GM12878 (cell line): ENCODE measurements at regions of chr9 and their contacts with region 1.

Region 1: GRCh38 chr9:110933350-110934001 is 104.8 kb downstream of the LPAR1 start:
- DNase-seq: peak; percentile 41
- ATAC-seq: peak; percentile 80
- H3K4me3 ChIP-seq: peak overlapping the region; percentile 5; the same call in 1 of the 2 replicates
- H3K27ac ChIP-seq: peak overlapping the region; percentile 47
- H3K4me1 ChIP-seq: peaks cover 10% of the 10 kb centered on the region
- H3K27me3 ChIP-seq: no peaks in the 10 kb centered on the region
- CTCF ChIP-seq: no peak
- EP300 ChIP-seq: 0 out of 4 replicates have a peak, but pooled peaks of 1 of the 2 experiments have one; percentile 15
- POLR2A ChIP-seq: no peak
- RAD21 ChIP-seq: no peak

Region 2: GRCh38 chr9:110088099-110088498 is 845.4 kb before region 1 on chr9:
- CTCF ChIA-PET with region 1: no interaction called
- POLR2A ChIA-PET with region 1: no interaction called
- RAD21 ChIA-PET with region 1: no interaction called
- SMC1A ChIA-PET with region 1: no interaction called
- in situ Hi-C with region 1: no loop called
- intact Hi-C with region 1: no loop called
- DNase-seq: no peak
- ATAC-seq: peak; percentile 84
- H3K4me3 ChIP-seq: no peak overlapping the region
- H3K27ac ChIP-seq: no peak overlapping the region
- H3K4me1 ChIP-seq: peaks cover 6% of the 10 kb centered on the region
- H3K27me3 ChIP-seq: no peaks in the 10 kb centered on the region
- CTCF ChIP-seq: no peak
- EP300 ChIP-seq: no peak
- POLR2A ChIP-seq: no peak
- RAD21 ChIP-seq: no peak

Region 3: GRCh38 chr9:110947491-110948044 is 14.1 kb after region 1 on chr9:
- CTCF ChIA-PET with region 1: interaction called, 15 read pairs
- POLR2A ChIA-PET with region 1: interaction called, 6 read pairs
- RAD21 ChIA-PET with region 1: interaction called, 33 read pairs
- SMC1A ChIA-PET with region 1: interaction called, 44 read pairs
- in situ Hi-C with region 1: no loop called
- intact Hi-C with region 1: no loop called
- DNase-seq: no peak
- ATAC-seq: no peak
- H3K4me3 ChIP-seq: no peak overlapping the region
- H3K27ac ChIP-seq: no peak overlapping the region
- H3K4me1 ChIP-seq: peaks cover 6% of the 10 kb centered on the region
- H3K27me3 ChIP-seq: no peaks in the 10 kb centered on the region
- CTCF ChIP-seq: no peak
- EP300 ChIP-seq: no peak
- POLR2A ChIP-seq: no peak
- RAD21 ChIP-seq: no peak

Region 4: DNA sequence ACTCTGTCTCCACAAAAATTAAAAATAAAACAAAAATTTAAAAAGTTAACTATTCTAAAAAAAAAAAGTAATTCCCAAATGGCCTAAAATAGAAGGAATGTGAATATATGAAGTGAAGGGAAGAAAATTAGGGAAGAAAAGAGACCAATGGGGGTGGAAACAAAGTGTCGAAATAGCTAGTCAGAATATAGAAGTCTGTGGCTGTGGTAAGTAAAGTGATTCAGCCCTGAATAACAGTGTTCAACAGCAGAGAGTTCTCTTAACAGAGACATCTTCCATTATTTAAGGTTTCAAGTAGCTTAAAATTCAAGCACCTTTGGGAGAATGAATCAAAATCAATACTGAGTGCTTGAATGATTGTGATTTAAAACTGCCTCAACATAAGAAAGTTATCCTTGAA is 53.1 kb after region 1 on chr9:
- CTCF ChIA-PET with region 1: no interaction called
- POLR2A ChIA-PET with region 1: no interaction called
- RAD21 ChIA-PET with region 1: interaction called, 8 read pairs
- SMC1A ChIA-PET with region 1: interaction called, 20 read pairs
- in situ Hi-C with region 1: no loop called
- intact Hi-C with region 1: no loop called
- DNase-seq: no peak
- ATAC-seq: no peak; the same call in 1 of the 3 replicates
- H3K4me3 ChIP-seq: no peak overlapping the region
- H3K27ac ChIP-seq: no peak overlapping the region
- H3K4me1 ChIP-seq: no peaks in the 10 kb centered on the region
- H3K27me3 ChIP-seq: no peaks in the 10 kb centered on the region
- CTCF ChIP-seq: no peak
- EP300 ChIP-seq: no peak
- POLR2A ChIP-seq: no peak
- RAD21 ChIP-seq: no peak

Region 5: DNA sequence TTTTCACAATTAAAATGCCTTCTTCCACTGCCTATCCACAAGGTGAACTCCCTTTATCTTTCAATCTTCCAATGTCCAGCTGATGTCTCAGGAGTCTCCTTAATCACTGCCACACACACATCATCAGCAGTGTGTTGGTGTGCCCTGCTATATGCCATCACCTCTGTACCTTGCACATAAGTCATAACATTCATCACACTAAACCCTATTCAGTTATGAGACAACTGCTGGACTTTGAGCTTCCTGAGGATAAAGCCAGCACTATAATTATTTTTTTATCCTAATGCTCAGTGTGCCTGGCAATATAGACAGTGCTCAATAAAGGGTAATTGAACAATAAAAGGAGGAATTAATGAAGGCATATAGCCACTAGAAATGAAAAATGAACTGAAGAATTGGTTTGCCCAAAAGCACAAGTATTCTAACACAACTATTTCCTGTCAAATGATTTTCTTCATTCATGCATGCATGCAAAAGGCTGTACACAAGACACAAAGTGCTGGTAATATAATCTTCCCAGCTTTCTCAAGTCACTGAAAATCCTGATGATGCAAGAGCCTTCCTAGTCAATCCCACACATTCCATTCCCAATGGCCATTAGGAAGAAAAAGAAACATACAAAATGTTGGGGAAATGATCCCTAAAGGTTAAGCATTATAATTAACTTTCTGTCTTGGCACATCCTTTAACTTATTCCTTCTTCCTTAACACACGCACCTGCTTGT is 72.4 kb after region 1 on chr9:
- CTCF ChIA-PET with region 1: no interaction called
- POLR2A ChIA-PET with region 1: interaction called, 11 read pairs
- RAD21 ChIA-PET with region 1: interaction called, 6 read pairs
- SMC1A ChIA-PET with region 1: interaction called, 4 read pairs
- in situ Hi-C with region 1: no loop called
- intact Hi-C with region 1: no loop called
- DNase-seq: no peak
- ATAC-seq: peak; percentile 59
- H3K4me3 ChIP-seq: no peak overlapping the region
- H3K27ac ChIP-seq: no peak overlapping the region
- H3K4me1 ChIP-seq: no peaks in the 10 kb centered on the region
- H3K27me3 ChIP-seq: no peaks in the 10 kb centered on the region
- CTCF ChIP-seq: no peak
- EP300 ChIP-seq: no peak
- POLR2A ChIP-seq: no peak
- RAD21 ChIP-seq: no peak